ENCODE measurements at regions of chr2 and their contacts with region 1.

Region 1: DNA sequence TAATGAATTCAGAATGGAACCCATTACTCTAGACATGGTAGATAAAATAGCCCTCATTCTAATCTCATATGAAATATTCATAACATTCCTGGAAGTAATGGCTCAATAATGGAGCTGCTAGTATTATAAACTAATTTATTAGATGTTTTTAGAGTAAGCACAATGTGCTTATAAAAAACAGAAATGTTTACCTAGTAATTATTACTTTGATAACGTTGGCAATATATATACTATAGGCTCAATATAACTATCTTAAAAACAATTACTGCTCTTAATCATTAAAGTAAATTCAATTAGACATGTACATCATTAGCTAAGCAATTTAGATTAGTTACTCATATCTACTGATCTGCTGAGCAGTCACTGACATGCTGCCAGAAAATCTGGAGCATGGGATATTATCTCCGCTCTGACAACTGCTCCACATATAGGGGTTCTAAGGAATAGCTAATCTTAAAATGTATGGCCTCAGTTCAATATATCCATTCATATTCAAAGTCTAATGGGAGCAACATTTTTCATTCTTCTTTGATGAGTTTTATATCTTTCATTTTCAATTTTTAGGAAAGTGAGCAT is 19.4 kb downstream of the PPP1R1C start:
- DNase-seq: no peak
- ATAC-seq: no peak
- H3K4me3 ChIP-seq: no peak overlapping the region
- H3K27ac ChIP-seq: no peak overlapping the region
- H3K4me1 ChIP-seq: no peaks in the 10 kb centered on the region
- H3K27me3 ChIP-seq: no peaks in the 10 kb centered on the region
- CTCF ChIP-seq: no peak

Region 2: DNA sequence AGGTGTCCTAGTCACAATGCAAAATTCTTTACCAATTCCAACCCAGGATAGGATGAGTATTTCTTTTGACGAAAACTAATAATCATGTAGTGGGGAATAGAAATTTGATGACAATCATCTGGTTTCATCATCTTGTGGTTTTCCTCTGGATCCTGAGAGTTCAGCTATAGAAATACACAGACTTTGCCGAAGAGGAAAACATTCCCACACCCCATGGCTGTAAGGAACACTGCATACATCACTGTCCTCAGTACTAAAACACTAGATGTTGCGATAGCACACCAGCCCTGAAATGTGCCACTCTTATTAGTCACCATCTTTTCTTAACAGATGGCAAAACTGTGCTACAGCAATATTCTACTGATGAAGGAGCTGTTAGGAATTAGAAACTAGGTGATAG is 377.5 kb before region 1 on chr2:
- CTCF ChIA-PET with region 1: no interaction called
- POLR2A ChIA-PET with region 1: no interaction called
- intact Hi-C with region 1: loop called (anchors 5 kb)
- DNase-seq: no peak
- ATAC-seq: no peak
- H3K4me3 ChIP-seq: no peak overlapping the region
- H3K27ac ChIP-seq: no peak overlapping the region
- H3K4me1 ChIP-seq: no peaks in the 10 kb centered on the region
- H3K27me3 ChIP-seq: no peaks in the 10 kb centered on the region
- CTCF ChIP-seq: no peak